HCT116 (cell line): ENCODE measurements at regions of chr20 and their contacts with region 1.

Region 1: DNA sequence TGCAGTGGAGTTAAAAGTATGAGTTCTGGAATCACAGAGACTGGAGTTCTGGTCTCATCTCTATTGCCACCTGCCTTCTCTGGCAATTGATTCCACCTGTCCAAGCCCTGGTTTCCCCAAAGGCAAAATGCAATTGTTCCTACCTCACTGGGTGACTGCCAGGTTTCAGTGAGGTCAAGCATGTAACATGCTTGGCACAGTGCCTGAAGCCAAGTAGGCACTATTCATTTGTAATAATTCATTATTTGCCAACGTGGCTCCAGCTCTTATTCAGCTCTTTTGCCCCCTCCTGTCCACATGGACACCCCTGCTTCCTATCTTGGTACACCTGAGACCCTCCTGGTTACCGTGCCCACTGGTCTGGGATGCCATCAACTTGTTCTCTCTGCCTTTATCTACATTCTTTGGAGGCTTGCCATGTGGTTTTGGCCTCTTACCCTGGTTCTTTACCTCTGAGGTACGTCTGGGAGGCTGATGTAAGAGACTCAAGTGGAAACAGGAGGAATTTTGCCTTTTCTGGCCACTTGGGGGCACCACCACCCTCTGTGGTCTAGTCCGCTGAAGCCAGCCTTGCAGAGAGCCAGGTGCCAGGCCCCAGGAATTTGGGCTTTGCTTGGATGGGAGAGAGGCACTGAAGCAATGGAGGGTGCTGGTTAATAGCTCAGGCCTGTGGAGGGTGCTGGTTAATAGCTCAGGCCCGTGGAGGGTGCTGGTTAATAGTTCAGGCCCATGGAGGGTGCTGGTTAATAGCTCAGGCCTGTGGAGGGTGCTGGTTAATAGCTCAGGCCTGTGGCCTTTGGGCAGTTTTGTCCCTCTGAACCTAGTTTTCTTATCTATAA is 1.7 kb downstream of the KCNK15 start:
- DNase-seq: peak; percentile 89
- ATAC-seq: peak; percentile 92
- H3K4me3 ChIP-seq: no peak overlapping the region
- H3K27ac ChIP-seq: no peak overlapping the region
- H3K4me1 ChIP-seq: peaks cover 8 to 12% of the 10 kb centered on the region in 2 experiments; a peak in 3 of 4 replicates
- H3K27me3 ChIP-seq: no peaks in the 10 kb centered on the region
- CTCF ChIP-seq: peak; percentile 78 to 88 (median 83)
- POLR2A ChIP-seq: no peak
- RAD21 ChIP-seq: peak; percentile 78

Region 2: DNA sequence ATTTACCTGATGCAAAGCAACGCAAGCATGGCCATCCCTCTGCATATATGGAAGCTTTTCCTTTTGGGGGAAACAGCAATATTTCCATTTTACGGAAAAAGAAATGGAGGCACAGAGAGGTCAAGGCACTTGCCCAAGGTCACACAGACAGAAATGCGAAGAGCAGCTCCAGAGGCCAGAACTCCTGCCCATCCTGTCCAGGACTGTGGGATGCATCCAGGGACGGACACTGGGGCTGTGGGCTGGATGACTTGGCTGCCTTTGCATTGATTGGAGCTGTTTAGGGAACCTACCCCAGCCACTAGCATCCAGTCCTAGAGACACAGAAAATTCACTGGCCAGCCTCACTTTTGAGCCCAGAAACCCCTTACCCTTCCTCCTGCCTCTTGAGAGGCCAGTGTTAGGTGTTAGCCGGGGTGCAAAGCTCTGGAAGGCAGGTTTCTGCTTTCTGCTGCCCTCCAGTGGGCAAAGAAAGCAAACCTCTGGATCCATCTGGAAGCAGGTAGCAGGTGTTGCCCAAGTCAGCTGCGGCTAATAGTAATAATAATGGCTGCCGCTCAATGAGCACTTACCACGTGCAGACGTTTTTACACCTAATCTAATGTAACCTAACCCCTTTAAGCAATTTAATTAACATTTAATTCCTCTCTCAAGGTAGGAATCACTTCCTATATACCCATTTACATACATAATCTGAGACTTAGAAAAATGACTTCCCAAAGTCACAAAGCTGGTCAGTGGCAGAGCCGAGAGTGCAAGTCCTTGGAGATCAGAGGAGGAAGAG is 63.9 kb before region 1 on chr20:
- CTCF ChIA-PET with region 1: interaction called, 10 read pairs
- POLR2A ChIA-PET with region 1: no interaction called
- RAD21 ChIA-PET with region 1: interaction called, 3 to 4 read pairs
- intact Hi-C with region 1: no loop called
- DNase-seq: peak; percentile 59
- ATAC-seq: peak; percentile 91
- H3K4me3 ChIP-seq: no peak overlapping the region
- H3K27ac ChIP-seq: no peak overlapping the region
- H3K4me1 ChIP-seq: peaks cover 3 to 22% of the 10 kb centered on the region in 2 experiments
- H3K27me3 ChIP-seq: no peaks in the 10 kb centered on the region
- CTCF ChIP-seq: peak; percentile 63 to 79 (median 77); a peak in 5 of 6 replicates
- POLR2A ChIP-seq: no peak
- RAD21 ChIP-seq: peak; percentile 79

Region 3: GRCh38 chr20:44785769-44786168 is 38.4 kb after region 1 on chr20:
- CTCF ChIA-PET with region 1: interaction called, 10 read pairs
- POLR2A ChIA-PET with region 1: interaction called, 3 read pairs
- RAD21 ChIA-PET with region 1: no interaction called
- intact Hi-C with region 1: no loop called
- DNase-seq: no peak
- ATAC-seq: peak; percentile 69
- H3K4me3 ChIP-seq: no peak overlapping the region
- H3K27ac ChIP-seq: no peak overlapping the region
- H3K4me1 ChIP-seq: no peaks in the 10 kb centered on the region
- H3K27me3 ChIP-seq: peaks cover 51% of the 10 kb centered on the region
- CTCF ChIP-seq: peak in 2 of 3 experiments; percentile 7 to 29; a peak in 1 of 6 replicates
- POLR2A ChIP-seq: no peak
- RAD21 ChIP-seq: peak; percentile 46

Region 4: DNA sequence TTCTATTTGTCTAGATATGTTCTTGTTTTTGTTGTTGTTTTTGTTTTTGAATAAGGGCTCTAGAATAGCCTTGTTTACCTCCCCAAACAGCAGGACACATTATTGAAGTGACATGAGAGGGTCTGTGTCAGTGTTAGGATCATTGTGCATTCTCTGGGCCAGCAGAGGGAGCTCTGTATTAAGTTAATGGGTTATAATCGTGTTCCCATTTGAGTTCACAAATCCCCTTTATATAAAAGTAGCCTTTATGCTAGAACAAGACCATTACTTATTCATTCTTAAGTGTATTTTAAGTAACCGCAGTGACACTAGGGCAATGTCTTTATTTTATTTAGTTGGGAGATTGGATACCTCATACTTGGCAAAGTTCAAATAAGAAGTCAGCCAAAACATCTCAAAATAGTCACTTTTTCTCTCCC is 263.7 kb after region 1 on chr20:
- CTCF ChIA-PET with region 1: no interaction called
- POLR2A ChIA-PET with region 1: no interaction called
- RAD21 ChIA-PET with region 1: no interaction called
- intact Hi-C with region 1: no loop called
- DNase-seq: peak; percentile 36
- ATAC-seq: peak; percentile 81
- H3K4me3 ChIP-seq: no peak overlapping the region
- H3K27ac ChIP-seq: no peak overlapping the region
- H3K4me1 ChIP-seq: peaks cover 13 to 19% of the 10 kb centered on the region in 2 experiments
- H3K27me3 ChIP-seq: no peaks in the 10 kb centered on the region
- CTCF ChIP-seq: peak; percentile 68 to 88 (median 74); a peak in 5 of 6 replicates
- POLR2A ChIP-seq: no peak
- RAD21 ChIP-seq: peak; percentile 80